ENCODE measurements at regions of chr20 and their contacts with region 1.

Region 1: DNA sequence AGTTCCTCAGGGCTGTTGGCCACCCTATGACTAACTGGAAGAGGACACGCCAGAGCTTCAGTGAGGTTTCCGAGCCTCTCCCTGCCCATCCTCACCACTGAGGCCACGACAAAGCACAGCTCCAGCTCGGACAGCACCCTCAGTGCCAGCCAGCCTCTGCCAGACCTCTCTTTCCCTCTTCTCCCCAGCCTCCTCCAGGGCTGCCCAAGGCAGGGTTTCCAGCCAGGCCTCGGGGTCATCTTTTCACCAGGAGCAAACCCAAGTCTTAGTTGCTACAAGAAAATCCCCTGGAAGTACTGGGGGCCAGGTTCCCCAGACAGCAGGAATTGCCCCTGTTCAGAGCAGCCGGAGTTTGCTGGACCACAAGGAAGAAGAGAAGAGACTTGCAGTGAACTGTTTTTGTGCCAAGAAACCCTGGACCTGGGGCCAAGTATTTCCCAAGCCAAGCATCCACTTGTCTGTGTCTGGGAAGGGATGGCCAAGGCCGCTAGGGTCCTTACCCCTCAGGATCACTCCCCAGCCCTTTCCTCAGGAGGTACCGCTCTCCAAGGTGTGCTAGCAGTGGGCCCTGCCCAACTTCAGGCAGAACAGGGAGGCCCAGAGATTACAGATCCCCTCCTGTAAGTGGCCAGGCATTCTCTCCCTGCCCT is 41.6 kb downstream of the PLAGL2 start:
- DNase-seq: no peak
- H3K4me3 ChIP-seq: no peak overlapping the region
- H3K27ac ChIP-seq: no peak overlapping the region
- H3K4me1 ChIP-seq: no peaks in the 10 kb centered on the region
- H3K27me3 ChIP-seq: no peaks in the 10 kb centered on the region
- CTCF ChIP-seq: no peak

Region 2: GRCh38 chr20:31979713-31980426 is 186.1 kb before region 1 on chr20:
- CTCF ChIA-PET with region 1: no interaction called
- POLR2A ChIA-PET with region 1: interaction called, 12 read pairs
- intact Hi-C with region 1: no loop called
- DNase-seq: no peak
- H3K4me3 ChIP-seq: no peak overlapping the region
- H3K27ac ChIP-seq: no peak overlapping the region
- H3K4me1 ChIP-seq: no peaks in the 10 kb centered on the region
- H3K27me3 ChIP-seq: peaks cover 67% of the 10 kb centered on the region
- CTCF ChIP-seq: no peak

Measured in PC-9 (cell line).